OCI-LY7 (cell line): ENCODE measurements at regions of chr1 and their contacts with region 1.

Region 1: GRCh38 chr1:9196129-9197040 is 38.2 kb upstream of the H6PD start:
- DNase-seq: peak; percentile 70
- H3K4me3 ChIP-seq: no peak overlapping the region
- H3K27ac ChIP-seq: no peak overlapping the region
- H3K4me1 ChIP-seq: peaks cover 17% of the 10 kb centered on the region
- CTCF ChIP-seq: peak; percentile 93

Region 2: GRCh38 chr1:8913111-8913856 is 283.1 kb before region 1 on chr1:
- CTCF ChIA-PET with region 1: no interaction called
- POLR2A ChIA-PET with region 1: no interaction called
- intact Hi-C with region 1: loop called (anchors 2 kb)
- DNase-seq: no peak
- H3K4me3 ChIP-seq: no peak overlapping the region
- H3K27ac ChIP-seq: no peak overlapping the region
- H3K4me1 ChIP-seq: peaks cover 2% of the 10 kb centered on the region
- CTCF ChIP-seq: no peak

Region 3: DNA sequence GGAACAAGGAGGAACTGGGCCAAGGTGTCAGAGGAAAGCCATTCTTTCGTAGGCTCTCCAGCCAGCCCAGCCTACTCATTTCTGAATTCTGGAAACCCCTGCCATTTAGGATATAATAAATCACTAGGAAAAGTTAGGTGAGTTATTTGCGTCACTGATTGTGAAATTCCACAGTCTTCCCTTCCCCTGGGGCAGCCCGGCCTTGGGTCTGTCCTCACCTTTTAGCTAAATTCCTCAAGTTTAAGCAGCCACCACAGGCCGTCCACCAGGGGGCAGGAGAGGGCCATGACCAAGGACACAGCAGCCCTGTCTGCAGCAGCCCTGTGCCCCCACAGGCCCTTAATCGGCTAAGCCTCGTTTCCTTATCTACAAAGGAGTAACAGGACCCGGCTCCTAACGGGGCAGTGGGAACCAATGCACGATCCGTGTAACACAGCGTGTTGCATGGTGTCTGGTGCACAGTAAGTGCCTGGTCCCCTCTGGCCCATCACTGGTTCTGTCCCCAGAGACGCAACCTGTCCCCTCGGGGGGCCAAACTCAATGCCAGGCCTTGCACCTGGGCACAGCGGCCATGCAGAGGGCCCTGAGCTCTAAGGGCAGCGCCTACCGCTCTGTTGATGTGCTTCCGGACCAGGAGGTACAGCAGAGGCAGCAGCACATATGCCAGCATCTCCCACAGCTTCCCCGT is 85.6 kb before region 1 on chr1:
- CTCF ChIA-PET with region 1: no interaction called
- POLR2A ChIA-PET with region 1: no interaction called
- intact Hi-C with region 1: loop called (anchors 1 kb)
- DNase-seq: peak; percentile 85
- H3K4me3 ChIP-seq: no peak overlapping the region
- H3K27ac ChIP-seq: no peak overlapping the region
- H3K4me1 ChIP-seq: peaks cover 15% of the 10 kb centered on the region
- CTCF ChIP-seq: peak; percentile 96

Region 4: GRCh38 chr1:9145021-9145668 is 51.2 kb before region 1 on chr1:
- CTCF ChIA-PET with region 1: no interaction called
- POLR2A ChIA-PET with region 1: no interaction called
- intact Hi-C with region 1: loop called (anchors 1 kb)
- DNase-seq: no peak
- H3K4me3 ChIP-seq: no peak overlapping the region
- H3K27ac ChIP-seq: no peak overlapping the region
- H3K4me1 ChIP-seq: no peaks in the 10 kb centered on the region
- CTCF ChIP-seq: no peak

Region 5: GRCh38 chr1:9593492-9594465 is 397.4 kb after region 1 on chr1:
- CTCF ChIA-PET with region 1: no interaction called
- POLR2A ChIA-PET with region 1: no interaction called
- intact Hi-C with region 1: no loop called
- DNase-seq: peak; percentile 76
- H3K4me3 ChIP-seq: no peak overlapping the region
- H3K27ac ChIP-seq: peak overlapping the region; percentile 2
- H3K4me1 ChIP-seq: peaks cover 43% of the 10 kb centered on the region
- CTCF ChIP-seq: no peak